ENCODE measurements at regions of chr6 and their contacts with region 1.

Region 1: GRCh38 chr6:39882531-39882899 is 51.7 kb downstream of the MOCS1 start:
- DNase-seq: no peak
- H3K4me3 ChIP-seq: no peak overlapping the region
- H3K27ac ChIP-seq: no peak overlapping the region
- H3K4me1 ChIP-seq: no peaks in the 10 kb centered on the region
- H3K27me3 ChIP-seq: no peaks in the 10 kb centered on the region
- CTCF ChIP-seq: no peak
- POLR2A ChIP-seq: no peak

Region 2: GRCh38 chr6:39792540-39793450 is 89.7 kb before region 1 on chr6:
- intact Hi-C with region 1: no loop called
- DNase-seq: no peak
- H3K4me3 ChIP-seq: peak overlapping the region; percentile 42 to 50
- H3K27ac ChIP-seq: peak overlapping the region; percentile 54 to 59
- H3K4me1 ChIP-seq: no peaks in the 10 kb centered on the region
- H3K27me3 ChIP-seq: no peaks in the 10 kb centered on the region
- CTCF ChIP-seq: no peak
- POLR2A ChIP-seq: no peak

Region 3: DNA sequence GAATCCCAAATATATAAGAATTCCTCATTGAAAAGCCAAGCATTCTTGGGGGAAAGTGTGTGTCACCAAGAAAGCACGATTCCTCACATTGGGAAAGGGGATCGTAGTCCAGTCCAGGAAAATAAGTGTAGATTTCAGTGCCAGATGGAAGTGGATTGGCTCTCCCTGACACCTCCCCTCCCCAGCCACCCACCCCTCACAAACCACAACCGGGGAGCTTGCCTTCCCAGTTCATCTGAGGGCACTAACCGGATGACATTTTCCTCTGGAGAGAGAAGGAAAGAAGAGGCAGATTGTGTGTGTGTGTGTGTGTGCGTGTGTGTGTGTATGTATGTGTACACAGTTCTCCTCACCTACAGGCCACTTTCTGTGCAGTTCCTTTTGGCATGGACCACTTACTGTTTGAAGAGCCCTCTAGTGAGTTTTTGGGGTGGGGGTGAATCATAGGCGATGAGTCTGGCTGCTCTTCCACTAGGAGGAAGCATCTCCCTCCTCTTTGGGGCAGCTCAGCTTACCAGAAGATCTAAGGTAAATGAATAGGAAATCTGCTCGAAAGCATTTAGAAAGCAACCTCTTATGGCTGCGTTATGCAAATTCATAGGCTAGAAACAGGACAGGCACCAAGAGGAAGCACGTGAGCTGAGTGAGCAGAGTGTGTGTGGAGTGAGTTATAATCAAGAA is 69.5 kb before region 1 on chr6:
- intact Hi-C with region 1: loop called (anchors 5 kb)
- DNase-seq: no peak
- H3K4me3 ChIP-seq: no peak overlapping the region
- H3K27ac ChIP-seq: no peak overlapping the region
- H3K4me1 ChIP-seq: no peaks in the 10 kb centered on the region
- H3K27me3 ChIP-seq: no peaks in the 10 kb centered on the region
- CTCF ChIP-seq: no peak
- POLR2A ChIP-seq: no peak

Measured in prostate gland (tissue), 2 donors.